K562 (cell line): ENCODE measurements at regions of chr9 and their contacts with region 1.

Region 1: GRCh38 chr9:33225319-33226149 is 14.4 kb upstream of the SPINK4 start:
- DNase-seq: peak; percentile 26 to 76 (median 30)
- ATAC-seq: peak; percentile 59
- H3K4me3 ChIP-seq: no peak overlapping the region
- H3K27ac ChIP-seq: no peak overlapping the region
- H3K4me1 ChIP-seq: peaks cover 0 to 4% of the 10 kb centered on the region in 2 experiments; a peak in 3 of 5 replicates
- H3K27me3 ChIP-seq: no peaks in the 10 kb centered on the region
- CTCF ChIP-seq: peak; percentile 46 to 80 (median 64); a peak in 5 of 6 replicates
- EP300 ChIP-seq: peak; percentile 23; the same call in 1 of the 2 replicates
- POLR2A ChIP-seq: no peak
- RAD21 ChIP-seq: peak; percentile 85 to 95

Region 2: GRCh38 chr9:32550562-32551433 is 674.7 kb before region 1 on chr9:
- CTCF ChIA-PET with region 1: no interaction called
- POLR2A ChIA-PET with region 1: no interaction called
- in situ Hi-C with region 1: loop called (anchors 25 kb)
- intact Hi-C with region 1: no loop called
- DNase-seq: peak; percentile 86 to 93 (median 88)
- ATAC-seq: peak; percentile 78
- H3K4me3 ChIP-seq: peak overlapping the region; percentile 73
- H3K27ac ChIP-seq: peak overlapping the region; percentile 97
- H3K4me1 ChIP-seq: peaks cover 14% of the 10 kb centered on the region in 2 experiments; a peak in 4 of 5 replicates
- H3K27me3 ChIP-seq: no peaks in the 10 kb centered on the region
- CTCF ChIP-seq: 0 out of 6 replicates have a peak, but pooled peaks of 2 of the 3 experiments have one; percentile 2 to 5
- EP300 ChIP-seq: no peak
- POLR2A ChIP-seq: peak; percentile 52; the same call in 1 of the 2 replicates
- RAD21 ChIP-seq: no peak

Region 3: DNA sequence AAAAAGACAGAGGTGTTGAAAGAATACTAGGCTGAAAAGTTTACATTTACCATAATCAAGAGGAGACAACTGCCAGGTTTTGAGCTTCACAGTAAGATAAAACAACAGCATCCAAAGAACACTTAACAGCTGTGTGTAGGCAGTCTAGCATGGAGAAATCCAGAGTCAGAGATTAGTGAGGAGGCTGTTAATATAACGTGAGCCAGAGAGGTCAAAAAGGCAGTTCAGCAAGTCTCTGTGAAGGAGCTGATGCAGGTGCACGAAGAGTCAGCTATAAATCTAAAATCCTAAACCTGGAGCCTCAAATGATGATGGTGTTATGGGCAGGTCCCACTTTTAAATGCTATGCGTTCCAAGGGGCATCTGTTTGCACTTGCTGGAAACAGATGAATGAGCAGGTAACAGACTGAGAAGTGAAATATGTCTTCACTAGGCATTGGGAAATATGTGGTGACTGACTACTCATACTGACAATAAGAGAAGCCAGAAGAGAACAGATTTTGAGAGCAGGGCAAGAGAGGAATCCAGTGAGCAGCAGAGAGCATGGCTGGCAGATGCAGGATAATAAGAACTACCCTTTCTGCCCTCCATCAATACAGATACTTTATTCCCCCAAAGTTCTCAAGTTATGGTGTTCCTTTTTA is 232.8 kb before region 1 on chr9:
- CTCF ChIA-PET with region 1: no interaction called
- POLR2A ChIA-PET with region 1: no interaction called
- in situ Hi-C with region 1: no loop called
- intact Hi-C with region 1: loop called (anchors 10 kb)
- DNase-seq: peak in 1 of 4 experiments; percentile 12
- ATAC-seq: peak; percentile 61
- H3K4me3 ChIP-seq: no peak overlapping the region
- H3K27ac ChIP-seq: peak overlapping the region; percentile 34; the same call in 1 of the 3 replicates
- H3K4me1 ChIP-seq: peaks cover 14 to 22% of the 10 kb centered on the region in 2 experiments; a peak in 4 of 5 replicates
- H3K27me3 ChIP-seq: no peaks in the 10 kb centered on the region
- CTCF ChIP-seq: no peak
- EP300 ChIP-seq: no peak
- POLR2A ChIP-seq: no peak
- RAD21 ChIP-seq: no peak

Region 4: GRCh38 chr9:33081128-33081851 is 144.2 kb before region 1 on chr9:
- CTCF ChIA-PET with region 1: interaction called, 42 read pairs
- POLR2A ChIA-PET with region 1: interaction called, 3 read pairs
- in situ Hi-C with region 1: loop called (anchors 5 kb)
- intact Hi-C with region 1: loop called (anchors 1 kb)
- DNase-seq: peak; percentile 47 to 83 (median 65)
- ATAC-seq: peak; percentile 84
- H3K4me3 ChIP-seq: no peak overlapping the region
- H3K27ac ChIP-seq: no peak overlapping the region; the same call in 2 of the 3 replicates
- H3K4me1 ChIP-seq: peaks cover 0 to 6% of the 10 kb centered on the region in 2 experiments; a peak in 3 of 5 replicates
- H3K27me3 ChIP-seq: no peaks in the 10 kb centered on the region
- CTCF ChIP-seq: peak; percentile 69 to 81 (median 76)
- EP300 ChIP-seq: no peak
- POLR2A ChIP-seq: no peak
- RAD21 ChIP-seq: peak; percentile 91 to 93